ENCODE measurements at regions of chr11 and their contacts with region 1.

Region 1: GRCh38 chr11:48097041-48097476 is 116.7 kb downstream of the PTPRJ start:
- DNase-seq: no peak
- H3K4me3 Mint-ChIP-seq: peak overlapping the region; percentile 4
- H3K27ac Mint-ChIP-seq: peak overlapping the region; percentile 74
- H3K4me1 Mint-ChIP-seq: peaks cover 61% of the 10 kb centered on the region
- H3K27me3 Mint-ChIP-seq: no peaks in the 10 kb centered on the region

Region 2: DNA sequence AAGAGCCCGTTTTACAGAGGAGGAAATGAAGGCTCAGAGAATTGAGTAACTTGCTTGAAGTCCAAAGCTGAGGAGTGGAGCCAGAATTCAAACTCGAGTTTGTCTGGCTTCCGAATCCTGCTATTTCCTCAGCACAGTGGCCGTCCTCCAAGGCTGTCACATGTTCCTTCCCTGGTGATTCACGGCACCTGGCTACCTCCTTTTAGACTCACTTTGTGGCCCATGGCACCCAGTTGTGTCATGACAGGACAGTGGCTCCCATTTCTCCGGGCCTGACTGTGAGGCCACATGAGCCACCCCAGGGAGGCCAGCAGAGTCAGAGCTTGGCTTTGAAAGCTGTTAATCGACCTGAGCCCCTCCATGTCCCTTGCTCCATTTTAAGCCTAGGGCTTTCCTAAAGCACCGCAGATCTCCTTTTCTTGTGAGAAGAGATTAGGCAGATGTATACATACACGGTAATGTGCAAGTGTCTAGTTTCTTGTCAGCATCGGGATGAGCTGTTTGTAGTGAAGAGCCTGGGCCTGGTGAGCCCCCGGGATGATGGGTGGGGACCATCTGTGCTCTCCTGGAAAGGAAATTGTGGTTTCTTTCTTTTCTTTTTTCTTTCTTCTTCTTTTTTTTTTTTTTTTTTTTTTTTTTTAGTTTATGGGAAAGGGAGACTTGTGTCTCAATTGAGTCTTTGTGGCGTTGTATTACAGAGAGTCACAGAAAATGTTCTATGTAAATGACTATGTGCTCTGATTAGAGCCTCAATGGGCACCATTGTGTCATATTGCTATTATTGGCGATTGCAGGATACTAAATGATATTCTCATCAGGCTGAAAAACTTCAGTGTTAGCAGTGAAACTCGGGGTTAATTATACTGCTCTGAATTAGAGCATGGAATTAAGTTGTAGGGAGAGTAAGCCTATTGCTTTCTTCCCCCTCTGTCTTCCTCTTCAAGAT is 61.9 kb before region 1 on chr11:
- intact Hi-C with region 1: no loop called
- DNase-seq: no peak
- H3K4me3 Mint-ChIP-seq: peak overlapping the region; percentile 3
- H3K27ac Mint-ChIP-seq: peak overlapping the region; percentile 34
- H3K4me1 Mint-ChIP-seq: peaks cover 63% of the 10 kb centered on the region
- H3K27me3 Mint-ChIP-seq: no peaks in the 10 kb centered on the region

Region 3: DNA sequence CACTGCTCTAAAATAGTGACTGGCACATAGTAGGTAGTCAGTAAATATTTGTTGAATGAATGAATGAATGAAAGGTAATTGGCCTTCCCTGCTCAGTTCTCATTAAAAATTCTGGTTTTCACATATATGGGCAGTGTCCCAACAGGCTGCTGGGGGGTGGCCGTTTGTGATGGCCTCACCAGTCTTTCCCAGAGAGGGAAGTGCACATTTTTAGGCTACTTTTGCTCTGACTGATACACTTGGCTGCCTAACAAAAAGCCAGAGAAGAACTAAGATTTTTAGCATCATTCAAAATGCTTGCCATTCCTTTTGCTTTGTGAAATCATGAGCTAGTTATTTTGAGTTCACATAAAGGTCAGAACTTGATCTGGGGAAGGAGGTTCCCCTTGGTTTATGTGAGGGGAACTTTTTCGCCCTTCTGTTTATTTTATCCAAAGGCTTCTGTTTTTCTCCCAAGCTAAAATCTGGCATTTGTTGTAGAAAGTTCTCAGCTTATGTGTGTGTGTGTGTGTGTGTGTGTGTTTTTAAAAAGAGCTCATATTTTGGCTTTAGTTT is 33.6 kb before region 1 on chr11:
- intact Hi-C with region 1: no loop called
- DNase-seq: no peak
- H3K4me3 Mint-ChIP-seq: no peak overlapping the region
- H3K27ac Mint-ChIP-seq: peak overlapping the region; percentile 64
- H3K4me1 Mint-ChIP-seq: peaks cover 59% of the 10 kb centered on the region
- H3K27me3 Mint-ChIP-seq: no peaks in the 10 kb centered on the region

Region 4: DNA sequence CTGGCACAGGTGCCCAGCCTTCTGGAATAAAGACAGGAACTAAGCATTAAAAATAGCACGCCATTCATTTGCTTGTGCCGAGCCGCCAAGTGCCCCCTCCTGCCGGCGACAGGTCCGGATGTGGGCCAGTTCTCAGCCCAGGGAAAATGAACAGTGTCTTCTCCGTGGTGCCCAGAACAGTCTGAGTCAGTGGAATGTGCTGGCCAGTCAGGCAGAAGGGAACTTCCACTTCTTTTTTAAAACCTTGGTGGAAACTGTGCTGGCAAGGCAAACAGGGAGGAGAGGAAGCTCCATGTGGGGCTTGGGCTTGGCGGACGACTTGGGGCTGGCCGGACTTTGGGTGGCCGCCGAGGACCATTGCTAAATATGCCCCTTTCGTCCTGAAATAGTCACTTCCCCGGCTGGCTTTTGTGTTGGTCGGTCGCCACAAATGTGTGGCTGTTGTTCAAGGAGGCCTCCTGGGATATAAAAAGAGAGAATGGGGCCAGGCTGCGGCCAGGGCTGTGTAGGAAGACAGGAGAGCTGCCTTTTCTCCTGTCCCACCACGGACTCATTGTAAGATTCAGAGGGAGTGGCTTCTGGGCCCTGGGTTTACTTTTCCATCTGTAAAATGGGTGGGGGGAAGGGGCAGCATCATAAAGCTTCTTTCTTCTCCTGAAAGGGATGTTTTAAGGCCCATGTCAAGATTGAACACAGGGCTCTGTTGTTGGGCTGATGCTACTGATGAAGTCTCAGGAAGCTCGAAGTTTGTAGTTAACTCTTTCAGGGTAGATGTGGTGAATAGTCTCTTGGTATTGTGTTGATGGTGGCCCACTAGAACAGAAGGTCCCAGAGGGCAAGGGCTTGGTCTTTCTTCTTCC is 15.7 kb before region 1 on chr11:
- intact Hi-C with region 1: loop called (anchors 2 kb)
- DNase-seq: no peak
- H3K4me3 Mint-ChIP-seq: peak overlapping the region; percentile 42
- H3K27ac Mint-ChIP-seq: peak overlapping the region; percentile 87
- H3K4me1 Mint-ChIP-seq: peaks cover 54% of the 10 kb centered on the region
- H3K27me3 Mint-ChIP-seq: no peaks in the 10 kb centered on the region

Region 5: DNA sequence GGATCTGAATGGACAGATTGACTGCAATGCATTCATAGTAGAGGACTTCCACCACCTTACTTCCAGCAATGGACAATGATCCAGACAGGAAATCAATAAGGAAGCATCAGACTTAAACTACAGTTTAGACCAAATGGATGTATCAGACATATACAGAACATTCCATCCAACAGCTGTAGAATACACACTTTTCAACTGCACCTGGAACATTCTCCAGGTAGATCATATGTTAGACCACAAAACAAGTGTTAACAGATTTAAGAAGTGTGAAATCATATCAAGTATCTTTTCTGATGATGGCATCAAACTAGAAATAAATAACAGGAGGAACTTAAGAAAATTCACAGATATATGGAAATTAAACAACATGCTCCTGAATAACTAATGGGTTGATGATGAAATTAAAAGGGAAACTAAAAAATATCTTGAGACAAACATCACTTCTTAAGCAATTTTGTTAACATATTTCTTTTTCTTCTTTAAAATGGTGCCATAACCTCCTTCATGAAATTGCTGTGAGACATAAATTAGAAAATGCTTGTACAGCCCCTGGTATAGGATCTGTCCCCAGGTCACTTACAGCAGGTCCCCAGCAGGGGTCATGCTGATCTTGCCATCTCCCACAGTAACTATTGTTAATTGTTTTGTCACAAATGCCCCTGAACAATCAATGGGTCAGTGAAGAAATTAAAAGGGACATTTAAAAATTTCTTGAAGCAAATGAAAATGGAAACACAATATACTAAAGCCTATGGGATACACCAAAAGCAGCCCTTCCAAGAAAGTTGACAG is 19.6 kb after region 1 on chr11:
- intact Hi-C with region 1: no loop called
- DNase-seq: peak; percentile 6
- H3K4me3 Mint-ChIP-seq: no peak overlapping the region
- H3K27ac Mint-ChIP-seq: no peak overlapping the region
- H3K4me1 Mint-ChIP-seq: peaks cover 2% of the 10 kb centered on the region
- H3K27me3 Mint-ChIP-seq: no peaks in the 10 kb centered on the region